Kidney (tissue), 22 donors: ENCODE measurements at regions of chr5 and their contacts with region 1.

Region 1: DNA sequence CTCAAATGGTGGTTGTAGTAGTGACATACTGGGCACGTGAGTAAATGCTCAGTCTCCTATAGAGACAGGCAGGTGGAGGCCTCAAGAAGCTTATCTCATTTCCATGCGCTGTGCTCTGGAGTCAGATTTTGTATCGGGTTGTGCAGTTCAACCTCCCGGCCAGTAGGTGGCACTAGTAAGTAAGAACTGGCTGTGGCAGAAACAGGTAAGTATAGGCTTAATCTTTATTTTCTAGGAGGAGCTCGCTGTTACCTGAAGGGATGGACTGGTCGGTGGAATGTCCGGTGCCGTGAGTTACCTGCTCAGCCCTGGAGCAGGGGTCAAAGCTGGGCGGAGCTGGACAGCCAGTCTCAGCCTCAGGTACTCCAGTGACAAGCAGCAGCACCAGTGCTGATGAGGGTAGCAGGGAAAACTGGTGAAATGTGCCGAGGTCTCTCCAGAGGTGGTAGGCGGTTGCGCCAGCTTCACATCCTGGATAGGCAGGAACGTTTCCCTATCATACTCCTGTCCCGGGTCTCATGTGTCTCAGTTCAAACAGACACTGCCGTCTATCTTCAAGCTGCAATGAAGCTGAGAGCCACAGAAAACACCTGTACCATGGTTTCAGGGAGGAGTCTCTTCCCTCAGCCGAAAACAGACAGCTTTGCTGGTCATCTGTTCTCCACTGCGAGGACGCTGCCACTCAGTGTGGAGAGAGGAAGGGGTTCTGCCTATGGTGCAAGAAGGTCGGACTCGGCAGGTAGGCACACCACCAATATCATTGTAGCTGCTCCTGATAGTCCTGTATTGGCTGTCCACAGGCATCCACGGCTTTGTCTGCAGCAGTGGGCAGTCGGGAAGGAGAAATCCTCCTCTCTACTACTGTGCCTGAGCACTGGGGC is 880.3 kb upstream of the SEMA6A start:
- DNase-seq: peak; percentile 30 to 59 (median 37)
- H3K4me3 ChIP-seq: peak overlapping the region; percentile 42 to 55 (median 53)
- H3K27ac ChIP-seq: no peak overlapping the region
- H3K4me1 ChIP-seq: no peaks in the 10 kb centered on the region
- H3K27me3 ChIP-seq: no peaks in the 10 kb centered on the region
- CTCF ChIP-seq: peak; percentile 75

Region 2: DNA sequence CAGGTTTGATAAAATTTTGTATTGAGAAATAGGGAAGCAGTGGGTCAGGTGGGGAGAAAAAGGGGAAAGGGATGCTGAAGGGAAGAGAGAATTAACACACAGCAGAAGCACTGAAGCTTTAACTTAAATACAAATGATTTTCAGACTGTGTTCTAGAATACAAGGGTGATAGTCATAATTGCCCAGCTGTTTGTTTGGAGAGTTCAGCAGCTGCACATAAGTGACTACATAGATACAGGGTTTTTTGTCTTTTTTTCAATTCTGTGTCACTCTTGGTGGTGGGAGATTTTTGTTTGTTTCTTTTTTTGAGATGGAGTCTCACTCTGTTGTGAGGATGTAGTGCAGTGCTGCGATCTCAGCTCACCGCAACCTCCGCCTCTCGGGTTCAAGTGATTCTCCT is 289.9 kb before region 1 on chr5:
- intact Hi-C with region 1: no loop called
- DNase-seq: no peak
- H3K4me3 ChIP-seq: no peak overlapping the region
- H3K27ac ChIP-seq: no peak overlapping the region
- H3K4me1 ChIP-seq: no peaks in the 10 kb centered on the region
- H3K27me3 ChIP-seq: no peaks in the 10 kb centered on the region
- CTCF ChIP-seq: no peak

Region 3: GRCh38 chr5:118791926-118792734 is 1337.2 kb after region 1 on chr5:
- intact Hi-C with region 1: loop called (anchors 10 kb)
- DNase-seq: peak in 4 of 5 donors; percentile 51 to 90 (median 69)
- H3K4me3 ChIP-seq: peak overlapping the region in 2 of 3 donors; percentile 38 to 51
- H3K27ac ChIP-seq: no peak overlapping the region
- H3K4me1 ChIP-seq: peaks cover 0 to 4% (median 0%) of the 10 kb centered on the region in 3 donors
- H3K27me3 ChIP-seq: no peaks in the 10 kb centered on the region
- CTCF ChIP-seq: peak; percentile 73